Colonic mucosa (tissue), 4 donors: ENCODE measurements at regions of chr20 and their contacts with region 1.

Region 1: DNA sequence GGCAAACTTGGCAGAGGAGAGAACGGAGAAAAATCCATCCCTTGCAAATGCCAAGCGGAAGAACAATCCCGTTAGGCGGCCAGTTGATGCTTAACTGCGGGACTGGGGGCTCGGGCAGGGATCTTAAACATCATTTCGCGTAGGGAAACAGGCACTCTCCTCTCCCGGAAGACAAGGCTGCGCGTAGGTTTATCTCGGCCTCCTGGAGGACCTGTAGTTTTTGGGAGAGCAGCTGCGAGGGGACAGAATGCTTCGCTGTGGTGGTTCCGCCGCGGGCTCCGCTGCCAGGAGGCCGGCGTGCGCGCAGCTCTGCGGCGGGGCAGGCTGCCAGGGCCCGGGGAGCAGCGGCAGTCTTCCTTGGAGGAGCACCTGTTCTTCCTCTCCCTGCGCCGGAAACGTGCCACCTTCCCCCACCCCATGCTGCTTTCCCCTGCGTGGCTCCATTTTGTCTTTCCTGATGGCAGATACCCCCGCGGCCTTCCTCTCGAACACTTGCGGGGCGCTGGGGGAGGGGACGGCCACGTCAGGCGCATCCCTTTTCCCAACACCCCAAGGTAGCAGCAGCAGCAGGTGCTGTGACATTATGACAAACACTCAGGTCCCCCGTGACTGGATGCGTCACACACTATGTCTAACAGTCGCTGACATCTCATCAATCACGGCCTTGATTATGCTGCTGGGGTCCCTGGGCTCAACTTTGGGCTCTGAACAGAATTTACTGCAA is 230.7 kb upstream of the BTBD3 start:
- DNase-seq: peak; percentile 34
- H3K4me3 ChIP-seq: peak overlapping the region; percentile 21
- H3K27ac ChIP-seq: no peak overlapping the region
- H3K4me1 ChIP-seq: no peaks in the 10 kb centered on the region
- H3K27me3 ChIP-seq: no peaks in the 10 kb centered on the region
- CTCF ChIP-seq: no peak

Region 2: GRCh38 chr20:11890331-11891080 is 203.5 kb after region 1 on chr20:
- intact Hi-C with region 1: loop called (anchors 10 kb)
- DNase-seq: peak; percentile 90
- H3K4me3 ChIP-seq: peak overlapping the region; percentile 65
- H3K27ac ChIP-seq: peak overlapping the region; percentile 95
- H3K4me1 ChIP-seq: no peaks in the 10 kb centered on the region
- H3K27me3 ChIP-seq: no peaks in the 10 kb centered on the region
- CTCF ChIP-seq: no peak